Lower leg skin (tissue), 4 donors: ENCODE measurements at regions of chr1 and their contacts with region 1.

Region 1: DNA sequence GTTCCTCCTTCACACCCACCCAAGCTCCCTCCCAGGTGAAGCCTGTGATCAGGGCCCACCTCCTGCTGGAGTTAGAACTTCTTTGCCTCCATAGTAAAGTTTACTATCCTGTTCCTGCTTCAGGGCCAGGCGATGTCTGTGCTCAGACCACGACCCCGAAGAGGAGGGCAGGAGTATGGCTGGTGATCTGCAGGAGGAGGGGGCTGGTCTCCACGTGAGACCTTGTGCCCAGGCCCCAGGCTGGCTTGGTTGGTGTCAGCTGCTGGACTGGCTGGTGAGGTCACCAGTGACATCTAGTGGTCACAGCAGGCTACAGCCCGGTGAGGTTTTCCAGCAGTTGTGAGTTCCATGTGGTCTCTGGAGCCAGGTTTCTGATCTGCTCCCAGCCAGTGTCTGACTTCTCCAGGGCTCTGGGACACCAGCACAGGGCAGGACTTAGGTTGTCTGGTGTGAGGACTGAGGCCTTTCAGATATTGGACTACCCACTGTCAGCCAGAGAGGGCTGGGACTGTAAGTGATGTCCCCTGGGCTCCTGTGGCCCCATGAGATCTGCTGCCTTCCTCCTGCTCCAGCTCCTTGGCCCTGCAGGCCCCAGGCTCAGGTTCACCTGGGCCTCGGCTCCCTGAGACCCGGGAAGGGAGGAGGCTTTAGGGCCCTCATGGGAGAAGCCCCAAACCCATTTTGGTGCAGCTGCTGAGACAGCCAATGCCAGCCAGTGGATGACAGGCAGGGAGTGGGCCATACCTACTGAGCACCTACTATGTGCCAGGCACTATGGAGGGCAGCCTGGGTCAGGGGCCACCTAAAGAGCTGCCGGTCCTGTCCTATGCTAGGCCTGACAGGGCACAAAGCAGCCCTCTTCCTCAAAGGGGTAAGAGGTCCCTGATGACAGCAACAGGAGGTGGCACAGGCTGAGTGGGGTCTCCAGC is 6.0 kb upstream of the UBL4B start:
- DNase-seq: peak; percentile 60 to 89
- H3K4me3 ChIP-seq: no peak overlapping the region
- CTCF ChIP-seq: peak in 1 of 3 donors; percentile 82
- POLR2A ChIP-seq: no peak

Region 2: DNA sequence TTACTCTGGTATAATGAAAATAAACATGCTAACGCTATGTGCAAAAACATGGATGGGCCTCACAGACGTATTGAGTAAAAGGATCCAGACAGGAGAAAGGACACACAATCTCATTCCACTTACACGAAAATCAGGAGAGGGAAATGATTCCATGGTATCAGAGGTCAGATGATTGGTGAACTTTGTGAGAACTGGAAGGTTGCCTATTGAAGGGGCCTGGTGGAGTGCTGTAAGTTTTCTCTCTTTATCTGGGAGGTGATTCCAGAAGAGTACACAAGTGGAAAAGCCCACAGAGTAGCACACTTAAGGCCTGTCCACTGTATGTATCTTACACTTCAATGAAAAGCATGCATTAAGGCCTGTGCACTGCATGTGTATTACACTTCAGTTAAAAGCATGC is 428.8 kb before region 1 on chr1:
- intact Hi-C with region 1: no loop called
- DNase-seq: no peak
- H3K4me3 ChIP-seq: no peak overlapping the region
- CTCF ChIP-seq: no peak
- POLR2A ChIP-seq: no peak

Region 3: DNA sequence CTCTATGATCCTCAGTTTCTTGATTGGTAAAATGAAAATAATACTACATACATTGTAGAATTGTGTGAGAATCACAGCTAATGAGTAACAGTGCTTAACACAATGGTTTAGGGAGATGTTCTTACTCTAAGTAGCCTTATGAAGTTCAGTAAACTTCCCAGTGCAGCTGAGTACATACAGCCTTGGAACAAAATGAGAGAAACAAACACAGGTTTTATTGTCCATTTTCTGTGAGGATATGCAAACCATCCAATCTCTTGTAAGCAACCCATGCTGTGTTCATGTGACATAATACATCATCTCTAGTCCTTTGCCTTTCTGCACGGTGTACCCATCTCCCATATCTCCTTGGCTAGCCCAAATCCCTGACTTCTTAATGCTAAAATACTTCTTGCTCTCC is 86.5 kb before region 1 on chr1:
- intact Hi-C with region 1: no loop called
- DNase-seq: no peak
- H3K4me3 ChIP-seq: no peak overlapping the region
- CTCF ChIP-seq: no peak
- POLR2A ChIP-seq: no peak

Region 4: GRCh38 chr1:110053557-110054428 is 52.5 kb before region 1 on chr1:
- intact Hi-C with region 1: loop called (anchors 5 kb)
- DNase-seq: peak; percentile 61 to 93
- H3K4me3 ChIP-seq: no peak overlapping the region
- CTCF ChIP-seq: peak in 1 of 3 donors; percentile 82
- POLR2A ChIP-seq: no peak

Region 5: DNA sequence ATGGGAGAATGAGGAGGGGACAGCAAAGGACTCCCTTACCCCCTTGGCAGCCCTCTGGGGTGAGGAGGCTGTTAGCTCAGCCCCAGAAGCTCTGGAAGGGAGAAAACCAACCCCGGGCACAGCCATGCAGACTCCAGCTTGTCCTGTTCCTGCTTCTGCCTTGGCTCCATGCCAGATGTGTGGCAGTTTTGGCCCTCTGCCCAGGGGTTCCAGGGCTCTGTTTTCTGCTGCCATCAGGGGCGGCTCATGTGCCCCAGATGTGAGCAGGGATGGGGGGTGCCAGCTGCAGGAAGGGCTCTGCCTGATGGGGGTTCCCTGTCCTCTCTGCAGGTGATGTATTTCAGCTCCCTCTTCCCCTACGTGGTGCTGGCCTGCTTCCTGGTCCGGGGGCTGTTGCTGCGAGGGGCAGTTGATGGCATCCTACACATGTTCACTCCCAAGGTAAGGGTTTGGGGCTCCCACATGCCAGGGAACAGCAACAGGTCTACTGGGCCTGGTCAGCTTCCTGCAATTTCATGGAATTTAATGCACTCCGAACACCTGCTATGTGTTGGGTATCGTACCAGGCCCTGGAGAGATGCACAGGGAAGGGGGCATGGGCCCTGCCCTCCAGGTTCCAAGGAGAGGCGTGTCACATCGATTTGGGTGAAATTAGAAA is 70.2 kb after region 1 on chr1:
- intact Hi-C with region 1: no loop called
- DNase-seq: peak in 1 of 2 donors; percentile 29
- H3K4me3 ChIP-seq: no peak overlapping the region
- CTCF ChIP-seq: no peak
- POLR2A ChIP-seq: no peak